ENCODE measurements at regions of chr15 and their contacts with region 1.

Region 1: DNA sequence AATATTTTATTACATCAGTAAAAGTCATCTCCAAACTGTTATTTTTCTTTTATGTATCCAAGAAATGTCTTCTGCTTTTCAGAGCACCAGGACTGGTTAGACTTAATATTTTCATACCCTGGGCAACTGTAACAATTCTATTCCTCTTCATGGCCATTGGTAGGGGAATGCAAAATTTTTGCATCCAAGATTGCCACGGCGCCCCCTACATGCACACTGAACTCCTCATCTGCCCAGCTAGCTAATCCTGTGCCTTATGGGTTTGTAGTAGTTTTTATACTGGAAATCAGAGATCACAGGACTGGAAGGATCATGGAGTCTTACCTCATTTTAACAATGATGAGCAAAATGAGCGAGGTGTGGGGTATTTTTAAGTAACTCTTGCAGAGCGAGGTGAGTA is 74.2 kb downstream of the CRTC3 start:
- DNase-seq: peak; percentile 82
- H3K4me3 Mint-ChIP-seq: no peak overlapping the region
- H3K27ac Mint-ChIP-seq: no peak overlapping the region
- H3K4me1 Mint-ChIP-seq: peaks cover 42% of the 10 kb centered on the region
- H3K27me3 Mint-ChIP-seq: no peaks in the 10 kb centered on the region

Region 2: DNA sequence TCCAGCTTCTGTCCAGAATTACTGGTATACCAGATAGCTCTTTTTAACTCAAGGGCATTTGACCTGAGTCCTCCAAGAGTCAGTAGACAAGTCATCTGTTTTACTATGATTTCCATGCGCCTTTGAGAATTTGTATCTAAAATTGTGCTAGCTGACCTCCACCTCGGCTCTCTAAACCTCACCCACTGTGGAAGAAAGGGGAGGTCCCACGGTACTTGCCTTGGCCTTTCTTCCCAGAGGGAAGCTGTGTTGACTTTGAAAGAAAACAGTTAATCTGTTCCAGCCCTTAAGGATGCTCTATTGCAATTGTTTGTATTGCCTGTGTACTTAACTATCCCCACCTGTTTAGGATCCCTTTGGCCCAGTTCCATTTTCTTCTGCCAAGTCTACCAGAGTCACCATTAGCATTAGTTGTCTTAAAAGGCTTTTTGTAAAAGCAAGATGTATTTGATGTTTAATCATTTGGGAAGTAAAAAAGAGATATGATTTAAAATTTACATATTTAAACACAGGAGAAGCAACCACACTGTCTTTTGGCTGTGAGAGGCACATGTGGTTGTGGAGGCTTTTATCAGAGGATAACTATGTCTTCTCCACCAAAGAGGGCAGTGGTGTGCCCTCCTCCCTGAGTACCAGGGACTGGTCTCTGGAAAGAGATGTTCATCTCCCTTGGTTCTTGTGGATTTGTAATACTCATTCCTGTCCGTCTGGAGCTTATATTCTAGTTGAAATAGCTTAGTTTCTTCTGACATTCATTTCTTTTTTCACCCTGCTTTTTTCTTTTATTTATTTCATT is 14.6 kb after region 1 on chr15:
- CTCF ChIA-PET with region 1: interaction called, 10 read pairs
- intact Hi-C with region 1: no loop called
- DNase-seq: no peak
- H3K4me3 Mint-ChIP-seq: no peak overlapping the region
- H3K27ac Mint-ChIP-seq: peak overlapping the region; percentile 14
- H3K4me1 Mint-ChIP-seq: peaks cover 46% of the 10 kb centered on the region
- H3K27me3 Mint-ChIP-seq: no peaks in the 10 kb centered on the region

Region 3: GRCh38 chr15:90638201-90638691 is 34.4 kb after region 1 on chr15:
- CTCF ChIA-PET with region 1: no interaction called
- intact Hi-C with region 1: no loop called
- DNase-seq: no peak
- H3K4me3 Mint-ChIP-seq: no peak overlapping the region
- H3K27ac Mint-ChIP-seq: peak overlapping the region; percentile 1
- H3K4me1 Mint-ChIP-seq: peaks cover 5% of the 10 kb centered on the region
- H3K27me3 Mint-ChIP-seq: no peaks in the 10 kb centered on the region